ENCODE measurements at regions of chr12 and their contacts with region 1.

Region 1: DNA sequence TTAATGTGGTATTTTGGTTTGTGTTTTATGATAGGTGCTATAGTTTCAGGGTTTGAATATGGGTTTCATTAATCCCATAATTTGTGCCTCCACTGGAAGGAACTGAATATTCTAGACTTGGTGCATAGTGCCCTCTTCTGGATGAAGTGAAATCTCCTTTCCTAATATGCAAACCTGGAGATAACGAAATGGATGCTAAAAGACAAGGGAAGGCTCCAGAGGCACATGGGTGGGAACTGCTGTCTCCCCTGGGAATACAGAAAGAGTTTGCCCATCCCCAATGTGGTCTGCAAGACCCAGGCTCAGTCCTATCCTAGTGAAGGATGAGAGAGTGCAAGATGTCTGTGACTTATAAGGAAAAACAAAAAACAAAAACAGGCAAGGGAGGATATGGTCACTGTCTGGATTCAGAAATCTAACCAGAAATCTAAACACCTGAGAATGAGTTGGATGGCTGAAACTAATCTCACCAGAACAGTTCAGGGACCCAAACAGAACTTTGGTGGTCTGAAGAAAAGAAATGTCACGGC is 142.3 kb upstream of the TMPO start:
- DNase-seq: peak; percentile 39
- ATAC-seq: peak; percentile 86
- H3K4me3 ChIP-seq: no peak overlapping the region
- H3K27ac ChIP-seq: no peak overlapping the region
- H3K4me1 ChIP-seq: no peaks in the 10 kb centered on the region
- H3K27me3 ChIP-seq: peaks cover 24% of the 10 kb centered on the region; the same call in 1 of the 2 replicates
- CTCF ChIP-seq: peak; percentile 57 to 78 (median 65); a peak in 5 of 6 replicates
- POLR2A ChIP-seq: no peak
- RAD21 ChIP-seq: peak; percentile 85

Region 2: GRCh38 chr12:96578526-96579125 is 1794.5 kb before region 1 on chr12:
- CTCF ChIA-PET with region 1: no interaction called
- POLR2A ChIA-PET with region 1: no interaction called
- RAD21 ChIA-PET with region 1: no interaction called
- intact Hi-C with region 1: loop called (anchors 2 kb)
- DNase-seq: peak; percentile 54
- ATAC-seq: peak; percentile 90
- H3K4me3 ChIP-seq: no peak overlapping the region
- H3K27ac ChIP-seq: no peak overlapping the region
- H3K4me1 ChIP-seq: peaks cover 0 to 5% of the 10 kb centered on the region in 2 experiments; a peak in 1 of 4 replicates
- H3K27me3 ChIP-seq: no peaks in the 10 kb centered on the region
- CTCF ChIP-seq: peak; percentile 52 to 75 (median 70); a peak in 4 of 6 replicates
- POLR2A ChIP-seq: no peak
- RAD21 ChIP-seq: peak; percentile 87

Region 3: DNA sequence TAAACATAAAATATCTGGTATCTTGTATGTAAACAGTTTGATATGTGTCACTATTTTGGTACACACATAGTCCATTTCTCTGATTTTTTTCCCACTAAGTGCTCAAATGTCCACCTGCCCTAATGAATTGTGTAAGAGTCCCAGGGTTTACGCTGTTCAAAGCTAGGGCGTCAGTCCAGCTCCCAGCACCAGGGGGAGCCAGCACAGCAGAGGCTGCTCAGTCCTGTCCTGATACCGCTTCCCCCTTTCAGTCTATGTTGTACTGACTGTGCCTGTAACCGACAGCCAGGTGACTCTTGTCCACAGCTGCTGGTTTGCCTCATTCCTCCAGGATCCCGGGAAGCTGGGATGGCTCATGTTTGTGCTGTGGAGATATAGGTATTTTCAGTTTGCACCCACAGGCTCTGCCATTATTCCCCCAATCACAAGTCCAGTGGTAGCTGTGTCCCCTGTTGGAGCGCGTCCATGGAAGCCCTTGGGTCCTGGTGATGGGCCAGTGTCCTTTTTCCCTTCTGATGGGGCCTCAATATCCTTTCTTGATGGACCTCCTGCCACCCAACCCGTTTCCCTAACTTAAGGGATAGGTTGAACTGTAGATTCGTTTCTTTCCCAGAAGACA is 1224.0 kb before region 1 on chr12:
- CTCF ChIA-PET with region 1: no interaction called
- POLR2A ChIA-PET with region 1: no interaction called
- RAD21 ChIA-PET with region 1: no interaction called
- intact Hi-C with region 1: loop called (anchors 2 kb)
- DNase-seq: peak; percentile 29
- ATAC-seq: peak; percentile 100
- H3K4me3 ChIP-seq: no peak overlapping the region
- H3K27ac ChIP-seq: no peak overlapping the region
- H3K4me1 ChIP-seq: no peaks in the 10 kb centered on the region
- H3K27me3 ChIP-seq: peaks cover 27% of the 10 kb centered on the region
- CTCF ChIP-seq: peak; percentile 47 to 91 (median 89); a peak in 5 of 6 replicates
- POLR2A ChIP-seq: no peak
- RAD21 ChIP-seq: peak; percentile 70

Region 4: GRCh38 chr12:97716356-97716755 is 656.7 kb before region 1 on chr12:
- CTCF ChIA-PET with region 1: no interaction called
- POLR2A ChIA-PET with region 1: no interaction called
- RAD21 ChIA-PET with region 1: no interaction called
- intact Hi-C with region 1: loop called (anchors 10 kb)
- DNase-seq: no peak
- ATAC-seq: peak; percentile 40; the same call in 1 of the 2 replicates
- H3K4me3 ChIP-seq: no peak overlapping the region
- H3K27ac ChIP-seq: no peak overlapping the region
- H3K4me1 ChIP-seq: no peaks in the 10 kb centered on the region
- H3K27me3 ChIP-seq: no peaks in the 10 kb centered on the region
- CTCF ChIP-seq: 0 out of 6 replicates have a peak, but pooled peaks of 2 of the 3 experiments have one; percentile 3 to 23
- POLR2A ChIP-seq: no peak
- RAD21 ChIP-seq: peak; percentile 31; the same call in 1 of the 2 replicates

Region 5: GRCh38 chr12:97960754-97961608 is 412.1 kb before region 1 on chr12:
- CTCF ChIA-PET with region 1: no interaction called
- POLR2A ChIA-PET with region 1: no interaction called
- RAD21 ChIA-PET with region 1: no interaction called
- intact Hi-C with region 1: loop called (anchors 2 kb)
- DNase-seq: peak; percentile 8
- ATAC-seq: peak; percentile 78
- H3K4me3 ChIP-seq: no peak overlapping the region
- H3K27ac ChIP-seq: no peak overlapping the region
- H3K4me1 ChIP-seq: no peaks in the 10 kb centered on the region
- H3K27me3 ChIP-seq: no peaks in the 10 kb centered on the region
- CTCF ChIP-seq: peak; percentile 29 to 82 (median 76); a peak in 5 of 6 replicates
- POLR2A ChIP-seq: no peak
- RAD21 ChIP-seq: peak; percentile 36

Region 6: GRCh38 chr12:98002712-98003493 is 370.2 kb before region 1 on chr12:
- CTCF ChIA-PET with region 1: no interaction called
- POLR2A ChIA-PET with region 1: no interaction called
- RAD21 ChIA-PET with region 1: no interaction called
- intact Hi-C with region 1: loop called (anchors 10 kb)
- DNase-seq: peak; percentile 39
- ATAC-seq: peak; percentile 78
- H3K4me3 ChIP-seq: no peak overlapping the region
- H3K27ac ChIP-seq: no peak overlapping the region
- H3K4me1 ChIP-seq: no peaks in the 10 kb centered on the region
- H3K27me3 ChIP-seq: peaks cover 6% of the 10 kb centered on the region; the same call in 1 of the 2 replicates
- CTCF ChIP-seq: peak in 2 of 3 experiments; percentile 55 to 62; a peak in 4 of 6 replicates
- POLR2A ChIP-seq: no peak
- RAD21 ChIP-seq: peak; percentile 45; the same call in 1 of the 2 replicates

Region 7: DNA sequence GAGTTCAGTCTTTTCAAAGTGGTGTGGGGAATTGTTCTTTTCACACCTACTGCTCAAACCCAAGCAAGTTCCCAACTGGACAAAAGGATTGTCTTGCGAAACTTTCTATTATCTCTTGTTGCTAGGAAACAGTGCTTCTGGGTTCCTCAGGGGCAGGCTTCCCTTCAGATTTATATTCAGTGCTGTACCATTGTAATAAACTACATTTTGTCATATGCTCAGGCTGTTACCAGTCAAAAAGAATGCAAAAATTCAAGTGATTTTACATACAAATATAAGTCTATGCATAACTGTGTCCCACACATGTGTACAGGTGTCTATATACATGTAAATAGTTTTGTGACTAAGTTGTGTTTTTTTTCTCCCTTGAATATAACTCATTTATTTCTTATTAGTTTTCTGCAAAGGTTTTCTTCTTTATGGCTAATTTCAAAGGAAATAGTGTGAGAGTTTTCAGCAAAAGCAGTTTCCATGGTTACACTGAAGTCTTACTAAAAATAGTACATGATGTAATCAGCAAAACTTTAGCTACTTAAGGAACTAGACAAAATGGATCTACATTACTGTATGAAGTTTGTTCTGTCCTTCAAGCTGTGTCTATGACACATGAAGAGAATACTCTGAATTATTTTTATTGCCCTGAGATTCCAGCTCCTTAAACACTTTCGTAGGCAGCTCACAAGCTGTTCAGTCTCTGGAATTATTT is 287.9 kb before region 1 on chr12:
- CTCF ChIA-PET with region 1: no interaction called
- POLR2A ChIA-PET with region 1: no interaction called
- RAD21 ChIA-PET with region 1: no interaction called
- intact Hi-C with region 1: no loop called
- DNase-seq: no peak
- ATAC-seq: no peak
- H3K4me3 ChIP-seq: no peak overlapping the region
- H3K27ac ChIP-seq: no peak overlapping the region
- H3K4me1 ChIP-seq: no peaks in the 10 kb centered on the region
- H3K27me3 ChIP-seq: peaks cover 9% of the 10 kb centered on the region; the same call in 1 of the 2 replicates
- CTCF ChIP-seq: no peak
- POLR2A ChIP-seq: no peak
- RAD21 ChIP-seq: no peak

Region 8: GRCh38 chr12:98227162-98227561 is 145.9 kb before region 1 on chr12:
- CTCF ChIA-PET with region 1: no interaction called
- POLR2A ChIA-PET with region 1: no interaction called
- RAD21 ChIA-PET with region 1: no interaction called
- intact Hi-C with region 1: loop called (anchors 5 kb)
- DNase-seq: peak; percentile 7
- ATAC-seq: peak; percentile 85
- H3K4me3 ChIP-seq: no peak overlapping the region
- H3K27ac ChIP-seq: no peak overlapping the region
- H3K4me1 ChIP-seq: no peaks in the 10 kb centered on the region
- H3K27me3 ChIP-seq: peaks cover 32% of the 10 kb centered on the region
- CTCF ChIP-seq: peak; percentile 43 to 71 (median 70); a peak in 5 of 6 replicates
- POLR2A ChIP-seq: no peak
- RAD21 ChIP-seq: peak; percentile 61

Region 9: DNA sequence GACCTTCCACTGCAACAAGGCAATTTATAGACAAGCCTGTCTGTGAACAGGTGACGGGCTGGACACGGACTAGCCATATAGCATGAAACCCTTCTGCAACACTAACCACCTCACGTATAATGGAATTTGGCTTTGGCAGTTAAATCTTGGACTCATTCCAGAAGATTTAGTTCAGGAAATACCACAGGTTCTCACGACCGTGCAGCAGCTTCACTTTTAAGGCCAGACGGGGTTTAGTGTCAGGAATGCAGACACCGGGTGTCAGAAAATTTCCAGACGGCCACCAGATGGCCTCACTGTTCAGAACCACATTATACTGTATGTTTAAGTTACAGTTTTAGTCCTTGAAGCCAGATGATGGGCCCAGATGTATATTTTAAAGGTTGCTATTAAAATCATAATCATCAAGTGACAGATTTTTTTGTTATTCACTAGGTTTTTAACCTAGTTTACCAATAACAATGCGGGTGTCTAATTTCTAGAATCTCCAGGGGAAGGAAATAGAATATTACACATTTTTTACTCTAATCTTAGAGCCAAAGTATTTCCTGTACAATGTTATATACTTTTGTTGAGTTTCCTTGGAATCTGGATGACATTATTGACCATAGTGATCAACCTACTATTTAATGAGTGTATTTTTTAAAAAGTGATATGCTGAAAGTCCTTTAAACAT is 51.8 kb after region 1 on chr12:
- CTCF ChIA-PET with region 1: no interaction called
- POLR2A ChIA-PET with region 1: no interaction called
- RAD21 ChIA-PET with region 1: no interaction called
- intact Hi-C with region 1: no loop called
- DNase-seq: peak; percentile 57
- ATAC-seq: peak; percentile 83
- H3K4me3 ChIP-seq: no peak overlapping the region
- H3K27ac ChIP-seq: no peak overlapping the region
- H3K4me1 ChIP-seq: peaks cover 3 to 16% of the 10 kb centered on the region in 2 experiments; a peak in 3 of 4 replicates
- H3K27me3 ChIP-seq: no peaks in the 10 kb centered on the region
- CTCF ChIP-seq: peak; percentile 64 to 81 (median 79)
- POLR2A ChIP-seq: no peak
- RAD21 ChIP-seq: peak; percentile 78

Measured in HCT116 (cell line).